Lower leg skin (tissue), 4 donors: ENCODE measurements at regions of chr16 and their contacts with region 1.

Region 1: DNA sequence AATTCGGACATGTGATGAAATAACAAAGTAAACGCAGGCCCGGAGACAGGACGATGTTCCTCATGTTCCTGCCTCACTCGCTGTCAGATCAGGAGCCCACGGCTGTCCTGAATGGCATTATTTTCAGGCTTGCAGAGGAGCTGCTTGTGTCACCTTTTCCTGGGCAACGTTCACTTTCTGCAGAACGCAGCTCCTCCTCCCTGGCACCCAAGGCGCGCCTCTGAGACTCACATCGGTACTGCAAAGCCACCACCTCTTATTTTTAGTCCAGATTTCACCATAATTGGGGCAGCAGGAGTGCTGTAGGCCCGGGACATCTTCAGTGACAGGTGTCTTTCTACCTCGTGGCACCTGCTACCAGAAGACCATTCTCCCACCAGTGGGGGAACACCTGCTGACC is 8.0 kb upstream of the C16orf96 start:
- DNase-seq: no peak
- H3K4me3 ChIP-seq: no peak overlapping the region
- CTCF ChIP-seq: no peak
- POLR2A ChIP-seq: no peak

Region 2: GRCh38 chr16:4461250-4462085 is 86.7 kb before region 1 on chr16:
- intact Hi-C with region 1: no loop called
- DNase-seq: no peak
- H3K4me3 ChIP-seq: no peak overlapping the region
- CTCF ChIP-seq: no peak
- POLR2A ChIP-seq: no peak

Region 3: DNA sequence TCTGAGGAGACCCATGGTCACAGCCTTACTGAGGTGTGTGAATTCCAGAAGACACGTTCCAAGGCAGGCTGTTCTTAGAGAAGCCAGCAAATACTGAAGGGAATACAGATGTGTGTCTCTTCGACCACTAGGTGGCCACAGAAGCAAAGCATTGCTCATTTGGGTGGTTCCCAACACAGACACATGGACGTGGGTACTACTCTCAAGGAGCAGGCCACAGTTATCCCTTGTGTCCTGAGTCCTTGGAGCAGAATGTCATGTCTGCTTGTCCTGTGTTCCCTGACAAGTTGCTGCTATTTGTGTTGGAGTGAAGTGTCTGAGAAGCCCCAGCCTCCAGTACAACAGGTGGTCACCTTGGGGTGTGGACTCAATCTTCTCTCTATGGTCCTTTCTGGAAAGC is 41.7 kb before region 1 on chr16:
- intact Hi-C with region 1: loop called (anchors 5 kb)
- DNase-seq: peak in 1 of 2 donors; percentile 71
- H3K4me3 ChIP-seq: no peak overlapping the region
- CTCF ChIP-seq: peak in 1 of 3 donors; percentile 55
- POLR2A ChIP-seq: no peak